ENCODE measurements at regions of chr1 and their contacts with region 1.

Region 1: DNA sequence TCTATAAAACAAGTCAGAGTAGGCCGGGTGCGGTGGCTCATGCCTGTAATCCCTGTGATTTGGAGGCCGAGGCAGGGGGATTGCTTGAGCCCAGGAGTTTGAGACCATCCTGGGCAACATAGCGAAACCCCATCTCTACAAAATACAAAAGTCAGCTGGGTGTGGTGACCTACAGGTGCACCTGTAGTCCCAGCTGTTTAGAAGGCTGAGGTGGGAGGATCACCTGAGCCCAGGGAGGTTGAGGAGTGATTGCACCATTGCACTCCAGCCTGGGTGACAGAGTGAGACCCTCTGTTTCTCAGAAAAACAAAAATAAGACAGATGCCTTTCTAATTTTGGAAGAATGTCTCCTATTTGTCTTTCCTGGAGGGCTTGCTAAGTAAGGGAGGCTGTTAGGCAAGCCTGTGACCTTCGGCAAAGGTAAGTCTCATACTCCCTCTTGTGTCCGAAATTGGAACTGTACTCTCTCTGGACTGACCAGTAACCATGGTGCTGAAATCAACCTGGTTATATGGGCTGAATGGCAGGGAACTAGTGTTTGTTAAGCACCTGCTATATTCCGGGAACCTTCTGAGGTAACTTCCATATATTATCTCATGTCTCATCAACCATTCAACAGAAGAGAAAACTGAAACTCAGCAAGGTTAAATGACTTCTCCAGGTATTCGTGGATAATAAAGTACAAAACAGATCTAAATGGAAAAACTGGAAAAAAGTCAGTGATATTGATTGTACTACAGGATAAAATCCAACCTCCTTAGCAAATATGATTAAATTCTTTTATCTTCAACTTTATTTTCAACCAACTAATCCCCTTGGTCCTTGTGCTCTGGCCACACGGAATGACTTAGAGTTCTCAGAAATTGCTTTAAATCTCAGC is 11.8 kb upstream of the RAB3B start:
- DNase-seq: peak; percentile 92
- H3K4me3 ChIP-seq: no peak overlapping the region
- H3K27ac ChIP-seq: no peak overlapping the region
- H3K4me1 ChIP-seq: peaks cover 21% of the 10 kb centered on the region
- H3K27me3 ChIP-seq: no peaks in the 10 kb centered on the region
- CTCF ChIP-seq: peak; percentile 91

Region 2: DNA sequence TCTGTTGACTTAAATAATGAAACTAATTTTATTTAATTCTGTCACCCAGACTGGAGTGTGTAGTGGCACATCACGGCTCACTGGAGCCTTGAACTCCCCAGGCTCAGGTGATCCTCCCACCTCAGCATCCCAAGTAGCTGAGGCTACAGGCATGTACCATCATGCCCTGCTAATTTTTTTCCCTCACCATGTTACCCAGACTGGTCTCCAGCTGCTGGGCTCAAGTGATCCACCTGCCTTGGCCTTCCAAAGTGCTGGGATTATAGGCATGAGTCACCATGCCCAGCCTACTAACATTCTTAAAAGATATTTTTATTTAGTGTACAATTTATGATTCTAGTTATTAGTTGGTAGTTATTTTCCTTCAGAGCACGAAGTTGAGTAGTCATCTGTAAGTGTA is 173.2 kb before region 1 on chr1:
- CTCF ChIA-PET with region 1: no interaction called
- POLR2A ChIA-PET with region 1: no interaction called
- intact Hi-C with region 1: loop called (anchors 5 kb)
- DNase-seq: no peak
- H3K4me3 ChIP-seq: no peak overlapping the region
- H3K27ac ChIP-seq: no peak overlapping the region
- H3K4me1 ChIP-seq: peaks cover 5% of the 10 kb centered on the region
- H3K27me3 ChIP-seq: no peaks in the 10 kb centered on the region
- CTCF ChIP-seq: no peak

Region 3: DNA sequence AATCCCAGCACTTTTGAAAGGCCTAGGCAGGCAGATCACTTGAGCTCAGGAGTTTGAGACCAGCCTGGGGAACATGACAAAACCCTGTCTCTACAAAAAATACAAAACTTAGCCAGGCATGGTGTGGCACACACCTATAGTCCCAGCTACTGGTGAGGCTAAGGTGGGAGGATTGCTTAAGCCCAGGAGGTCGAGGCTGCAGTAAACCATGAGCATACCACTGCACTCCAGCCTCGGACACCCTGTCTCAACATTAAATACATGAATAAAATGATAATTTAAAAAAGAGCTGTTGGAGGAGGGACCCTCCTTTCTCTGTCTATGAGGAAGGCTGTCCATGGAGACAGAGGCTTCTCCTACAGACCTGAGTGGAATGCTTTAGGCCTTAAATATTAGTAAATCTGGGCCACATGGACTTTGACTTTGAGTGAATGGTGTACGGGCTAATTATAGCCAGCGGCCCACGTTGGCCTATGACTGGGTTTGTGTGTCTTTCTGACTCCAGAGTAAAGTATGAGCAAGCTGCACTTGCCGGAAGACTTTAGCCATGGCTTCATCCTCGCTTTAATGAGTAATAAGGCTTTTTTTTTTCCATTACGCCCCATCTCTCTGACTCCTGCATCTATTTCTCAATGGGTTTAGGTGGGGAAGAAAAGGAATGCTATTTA is 33.1 kb before region 1 on chr1:
- CTCF ChIA-PET with region 1: no interaction called
- POLR2A ChIA-PET with region 1: no interaction called
- intact Hi-C with region 1: no loop called
- DNase-seq: no peak
- H3K4me3 ChIP-seq: no peak overlapping the region
- H3K27ac ChIP-seq: no peak overlapping the region
- H3K4me1 ChIP-seq: peaks cover 28% of the 10 kb centered on the region
- H3K27me3 ChIP-seq: no peaks in the 10 kb centered on the region
- CTCF ChIP-seq: no peak

Region 4: DNA sequence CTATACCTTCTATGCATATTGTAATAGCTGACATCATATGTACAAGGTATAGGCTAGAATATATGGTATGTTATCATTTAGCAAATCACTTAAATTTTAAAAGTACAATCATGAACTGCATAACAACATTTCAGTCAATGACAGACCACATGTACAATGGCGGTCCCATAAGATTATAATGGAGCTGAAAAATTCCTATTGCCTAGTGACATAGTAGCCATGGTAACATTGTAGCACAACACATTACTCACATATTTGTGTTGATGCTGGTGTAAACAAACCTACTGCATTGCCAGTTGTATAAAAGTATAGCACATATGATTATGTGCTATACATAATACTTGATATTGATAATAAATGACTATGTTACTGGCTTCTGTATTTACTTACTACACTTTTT is 20.7 kb before region 1 on chr1:
- CTCF ChIA-PET with region 1: no interaction called
- POLR2A ChIA-PET with region 1: no interaction called
- intact Hi-C with region 1: no loop called
- DNase-seq: no peak
- H3K4me3 ChIP-seq: no peak overlapping the region
- H3K27ac ChIP-seq: no peak overlapping the region
- H3K4me1 ChIP-seq: peaks cover 8% of the 10 kb centered on the region
- H3K27me3 ChIP-seq: no peaks in the 10 kb centered on the region
- CTCF ChIP-seq: no peak

Region 5: DNA sequence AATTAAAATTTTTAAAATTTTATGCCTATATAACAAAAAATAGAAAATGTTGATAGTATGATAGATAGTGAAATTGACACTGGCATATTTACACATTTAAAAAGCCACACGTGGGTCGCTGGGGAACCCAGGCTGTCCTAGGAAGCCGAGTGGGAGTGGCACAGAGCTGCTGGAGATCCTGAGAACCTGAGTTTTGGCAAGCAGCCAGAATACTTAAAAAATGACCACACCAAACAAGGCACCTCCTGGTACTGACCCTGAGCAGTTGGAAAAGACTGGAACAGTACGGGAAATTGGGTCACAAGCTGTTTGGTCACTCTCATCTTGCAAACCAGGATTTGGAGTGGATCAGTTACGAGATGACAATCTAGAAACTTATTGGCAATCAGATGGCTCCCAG is 251.1 kb after region 1 on chr1:
- CTCF ChIA-PET with region 1: no interaction called
- POLR2A ChIA-PET with region 1: no interaction called
- intact Hi-C with region 1: no loop called
- DNase-seq: no peak
- H3K4me3 ChIP-seq: no peak overlapping the region
- H3K27ac ChIP-seq: no peak overlapping the region
- H3K4me1 ChIP-seq: no peaks in the 10 kb centered on the region
- H3K27me3 ChIP-seq: no peaks in the 10 kb centered on the region
- CTCF ChIP-seq: no peak